CD8-positive, alpha-beta T cell (primary cell): ENCODE measurements at regions of chr6 and their contacts with region 1.

Region 1: DNA sequence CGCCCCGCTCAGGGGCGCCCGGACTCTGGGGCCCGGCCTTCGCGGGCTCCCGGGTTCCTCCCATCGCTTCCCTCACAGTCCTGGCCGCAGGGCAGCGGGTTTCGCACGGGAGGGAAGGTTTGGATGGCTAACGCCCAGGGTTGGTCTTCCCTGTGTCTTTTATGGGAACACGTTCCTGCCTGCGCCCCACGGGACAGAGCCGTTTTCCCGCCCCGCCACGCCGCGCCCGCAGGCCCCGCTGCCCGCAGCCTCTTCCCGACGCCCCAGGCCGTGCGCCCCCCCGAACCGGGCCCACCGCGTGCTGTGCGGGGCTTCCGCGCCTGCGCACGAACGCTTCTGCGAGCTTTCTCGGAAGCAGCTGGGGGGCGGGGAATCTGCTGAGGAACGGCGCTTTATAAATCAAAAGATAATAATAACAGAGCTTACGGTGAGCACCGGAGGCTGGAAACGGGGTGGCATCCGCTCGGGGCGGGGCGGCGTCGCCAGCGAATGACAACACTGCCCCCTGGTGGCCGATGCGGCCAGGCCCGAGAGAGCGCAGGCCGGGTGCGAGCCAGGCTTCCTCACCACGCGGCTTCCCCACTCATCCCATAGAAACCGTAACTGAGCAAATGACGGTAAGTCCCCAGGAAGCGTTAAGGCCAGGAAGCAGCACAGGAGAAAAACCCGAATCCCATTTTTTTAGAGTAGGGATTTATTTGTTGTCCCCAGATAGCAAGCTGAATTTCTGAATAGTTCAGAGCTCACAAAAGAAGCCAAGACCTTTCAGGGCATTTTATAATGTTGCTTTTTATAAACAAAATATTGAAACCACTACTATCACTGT is 116.4 kb downstream of the MYLK4 start:
- DNase-seq: peak; percentile 62 to 92 (median 80)
- ATAC-seq: peak; percentile 95
- H3K4me3 ChIP-seq: peak overlapping the region; percentile 35 to 52
- H3K4me3 Mint-ChIP-seq: peak overlapping the region; percentile 70
- H3K27ac ChIP-seq: no peak overlapping the region
- H3K27ac Mint-ChIP-seq: no peak overlapping the region
- H3K4me1 ChIP-seq: peaks cover 6% of the 10 kb centered on the region
- H3K4me1 Mint-ChIP-seq: peaks cover 9% of the 10 kb centered on the region
- H3K27me3 ChIP-seq: peaks cover 0 to 6% of the 10 kb centered on the region in 2 experiments
- H3K27me3 Mint-ChIP-seq: peaks cover 9% of the 10 kb centered on the region
- CTCF ChIP-seq: peak; percentile 90

Region 2: DNA sequence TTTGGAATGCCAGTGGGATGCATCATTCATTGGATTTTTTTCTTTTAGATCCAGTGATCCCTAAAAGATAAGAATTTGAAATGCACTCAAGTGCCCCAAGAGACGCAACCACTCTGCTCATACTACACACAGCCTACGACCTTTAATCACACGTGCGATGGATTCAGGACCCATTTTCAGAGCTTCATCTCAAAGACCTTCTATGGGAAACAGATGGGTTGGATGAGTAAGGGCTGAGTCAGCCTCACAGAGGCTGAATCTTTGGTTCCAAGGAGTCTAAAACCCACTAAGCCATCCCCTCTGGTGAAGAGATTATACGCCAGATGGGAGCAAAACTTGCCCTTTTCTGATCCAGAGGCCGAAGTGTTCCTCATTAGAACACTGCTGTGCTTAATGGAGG is 1675.8 kb before region 1 on chr6:
- CTCF ChIA-PET with region 1: no interaction called
- POLR2A ChIA-PET with region 1: no interaction called
- intact Hi-C with region 1: no loop called
- DNase-seq: no peak
- ATAC-seq: no peak
- H3K4me3 ChIP-seq: no peak overlapping the region
- H3K4me3 Mint-ChIP-seq: no peak overlapping the region
- H3K27ac ChIP-seq: no peak overlapping the region
- H3K27ac Mint-ChIP-seq: no peak overlapping the region
- H3K4me1 ChIP-seq: no peaks in the 10 kb centered on the region
- H3K4me1 Mint-ChIP-seq: no peaks in the 10 kb centered on the region
- H3K27me3 ChIP-seq: no peaks in the 10 kb centered on the region
- H3K27me3 Mint-ChIP-seq: peaks cover 18% of the 10 kb centered on the region
- CTCF ChIP-seq: no peak

Region 3: GRCh38 chr6:1604158-1605030 is 1030.0 kb before region 1 on chr6:
- CTCF ChIA-PET with region 1: interaction called, 218 read pairs
- POLR2A ChIA-PET with region 1: no interaction called
- intact Hi-C with region 1: loop called (anchors 1 kb)
- DNase-seq: peak; percentile 34 to 81 (median 61)
- ATAC-seq: peak; percentile 72
- H3K4me3 ChIP-seq: peak overlapping the region in 1 of 2 experiments; percentile 33
- H3K4me3 Mint-ChIP-seq: peak overlapping the region; percentile 11
- H3K27ac ChIP-seq: no peak overlapping the region
- H3K27ac Mint-ChIP-seq: no peak overlapping the region
- H3K4me1 ChIP-seq: peaks cover 45% of the 10 kb centered on the region
- H3K4me1 Mint-ChIP-seq: peaks cover 37% of the 10 kb centered on the region
- H3K27me3 ChIP-seq: peaks cover 40 to 53% of the 10 kb centered on the region in 2 experiments
- H3K27me3 Mint-ChIP-seq: peaks cover 76% of the 10 kb centered on the region
- CTCF ChIP-seq: peak; percentile 93

Region 4: DNA sequence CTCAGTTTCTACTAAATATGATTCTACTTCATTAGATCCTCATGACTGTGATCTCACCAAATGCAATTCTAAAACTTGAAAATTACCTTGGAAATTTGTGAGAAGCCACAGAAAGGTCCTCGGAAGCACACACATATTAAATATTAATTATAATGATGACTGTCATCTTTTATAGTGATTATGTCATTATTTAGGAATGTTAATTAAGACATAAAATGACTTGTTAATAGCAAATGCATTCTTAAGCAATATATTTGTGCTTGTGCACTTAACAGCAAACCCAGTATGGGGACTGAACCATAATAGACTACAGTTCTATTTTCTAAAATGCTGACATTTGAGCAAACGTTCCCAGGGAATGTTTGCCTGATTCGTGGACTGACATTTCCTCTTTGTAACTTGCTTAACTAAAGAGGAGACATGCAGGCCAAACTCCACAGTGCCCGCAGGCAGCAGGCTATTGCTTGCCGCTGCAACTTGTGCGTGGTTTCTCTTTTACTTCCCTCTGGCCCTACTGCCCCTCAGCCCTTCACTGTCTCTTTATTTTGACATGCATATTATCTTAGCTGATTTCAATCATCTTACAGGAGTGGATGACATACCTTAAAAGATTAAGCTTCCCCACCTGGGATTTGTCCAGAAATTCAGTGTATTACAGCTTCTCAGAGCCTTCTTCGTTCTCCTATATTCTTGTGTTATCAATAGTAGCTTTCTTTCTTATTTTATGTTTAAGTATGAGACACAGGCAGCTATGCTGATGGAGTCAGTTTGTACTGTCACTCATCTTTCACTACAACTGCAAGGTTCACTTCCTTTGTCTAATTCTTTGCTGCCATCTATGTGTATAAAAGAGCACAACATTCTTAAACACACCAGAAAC is 530.5 kb before region 1 on chr6:
- CTCF ChIA-PET with region 1: interaction called, 8 read pairs
- POLR2A ChIA-PET with region 1: no interaction called
- intact Hi-C with region 1: loop called (anchors 5 to 10 kb)
- DNase-seq: peak in 2 of 9 experiments; percentile 37 to 53
- ATAC-seq: peak; percentile 48
- H3K4me3 ChIP-seq: no peak overlapping the region
- H3K4me3 Mint-ChIP-seq: no peak overlapping the region
- H3K27ac ChIP-seq: no peak overlapping the region
- H3K27ac Mint-ChIP-seq: no peak overlapping the region
- H3K4me1 ChIP-seq: no peaks in the 10 kb centered on the region
- H3K4me1 Mint-ChIP-seq: no peaks in the 10 kb centered on the region
- H3K27me3 ChIP-seq: peaks cover 0 to 2% of the 10 kb centered on the region in 2 experiments
- H3K27me3 Mint-ChIP-seq: no peaks in the 10 kb centered on the region
- CTCF ChIP-seq: peak; percentile 44

Region 5: DNA sequence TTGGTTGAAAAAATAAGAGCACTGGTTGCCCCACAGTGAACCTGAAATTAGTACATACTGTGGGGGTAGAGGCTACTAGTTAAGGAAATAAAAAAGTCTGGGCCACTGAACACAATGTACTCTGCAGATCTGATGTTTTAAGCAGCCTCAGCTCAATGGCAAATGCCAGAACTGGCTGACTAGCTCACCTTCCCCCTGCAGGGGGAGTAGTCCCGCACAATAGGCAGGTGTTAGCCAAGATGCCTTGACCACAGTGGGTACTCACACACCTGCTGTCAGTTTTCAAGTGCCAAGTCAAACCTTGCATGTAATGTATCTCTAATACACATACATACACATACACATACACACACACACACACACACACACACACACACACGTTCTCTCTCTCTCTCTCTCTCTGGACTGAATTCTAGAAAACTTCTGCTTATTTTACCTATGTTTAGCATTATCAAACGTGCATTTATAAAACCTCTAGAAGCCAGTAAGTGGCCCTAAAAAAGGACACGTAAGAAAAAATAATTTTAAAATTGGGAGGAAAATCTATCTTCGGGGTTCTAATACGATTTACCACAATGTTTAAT is 425.0 kb before region 1 on chr6:
- CTCF ChIA-PET with region 1: interaction called, 17 read pairs
- POLR2A ChIA-PET with region 1: no interaction called
- intact Hi-C with region 1: loop called in 1 of 2 experiments (anchors 1 kb)
- DNase-seq: peak in 4 of 9 experiments; percentile 18 to 51 (median 35)
- ATAC-seq: no peak
- H3K4me3 ChIP-seq: no peak overlapping the region
- H3K4me3 Mint-ChIP-seq: no peak overlapping the region
- H3K27ac ChIP-seq: no peak overlapping the region
- H3K27ac Mint-ChIP-seq: no peak overlapping the region
- H3K4me1 ChIP-seq: no peaks in the 10 kb centered on the region
- H3K4me1 Mint-ChIP-seq: peaks cover 3% of the 10 kb centered on the region
- H3K27me3 ChIP-seq: no peaks in the 10 kb centered on the region
- H3K27me3 Mint-ChIP-seq: no peaks in the 10 kb centered on the region
- CTCF ChIP-seq: no peak

Region 6: GRCh38 chr6:2622671-2623070 is 11.7 kb before region 1 on chr6:
- CTCF ChIA-PET with region 1: interaction called, 14 read pairs
- POLR2A ChIA-PET with region 1: no interaction called
- intact Hi-C with region 1: no loop called
- DNase-seq: no peak
- ATAC-seq: no peak
- H3K4me3 ChIP-seq: no peak overlapping the region
- H3K4me3 Mint-ChIP-seq: no peak overlapping the region
- H3K27ac ChIP-seq: no peak overlapping the region
- H3K27ac Mint-ChIP-seq: no peak overlapping the region
- H3K4me1 ChIP-seq: no peaks in the 10 kb centered on the region
- H3K4me1 Mint-ChIP-seq: no peaks in the 10 kb centered on the region
- H3K27me3 ChIP-seq: no peaks in the 10 kb centered on the region
- H3K27me3 Mint-ChIP-seq: peaks cover 13% of the 10 kb centered on the region
- CTCF ChIP-seq: no peak

Region 7: DNA sequence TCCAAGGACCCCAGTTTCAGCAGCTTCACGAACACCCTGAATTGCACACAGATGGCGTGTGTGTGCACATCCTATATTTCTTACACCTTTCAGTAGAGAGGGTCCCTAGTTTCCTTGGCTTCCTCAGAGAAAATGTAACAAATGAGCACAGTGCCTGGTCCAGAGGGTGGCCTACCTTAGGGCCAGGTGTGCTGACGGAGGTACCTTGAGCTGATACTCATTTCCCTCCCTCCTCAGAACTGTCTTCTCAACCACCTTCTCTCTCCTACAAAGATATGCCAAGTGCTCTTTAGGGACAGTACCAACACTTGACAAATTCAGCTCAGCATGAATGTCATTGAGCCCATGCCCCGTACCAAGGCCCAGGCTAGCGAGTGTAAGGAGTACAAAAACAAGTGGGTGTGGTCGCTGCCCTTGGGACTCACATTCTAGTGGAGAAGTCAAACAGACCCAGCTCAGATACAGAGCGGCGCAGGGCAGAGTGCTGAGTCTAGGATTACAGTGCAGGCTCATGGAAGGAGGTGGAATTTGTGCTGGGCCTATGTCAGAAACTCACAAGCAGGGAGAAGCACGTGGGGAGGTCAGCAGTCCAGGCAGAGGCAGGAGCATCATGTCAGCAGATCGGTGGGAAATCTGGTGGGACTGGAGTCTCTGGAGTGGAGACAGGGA is 474.5 kb after region 1 on chr6:
- CTCF ChIA-PET with region 1: no interaction called
- POLR2A ChIA-PET with region 1: no interaction called
- intact Hi-C with region 1: no loop called
- DNase-seq: no peak
- ATAC-seq: no peak
- H3K4me3 ChIP-seq: no peak overlapping the region
- H3K4me3 Mint-ChIP-seq: no peak overlapping the region
- H3K27ac ChIP-seq: no peak overlapping the region
- H3K27ac Mint-ChIP-seq: peak overlapping the region; percentile 33
- H3K4me1 ChIP-seq: no peaks in the 10 kb centered on the region
- H3K4me1 Mint-ChIP-seq: peaks cover 2% of the 10 kb centered on the region
- H3K27me3 ChIP-seq: no peaks in the 10 kb centered on the region
- H3K27me3 Mint-ChIP-seq: no peaks in the 10 kb centered on the region
- CTCF ChIP-seq: no peak